ENCODE measurements at regions of chr12 and their contacts with region 1.

Region 1: DNA sequence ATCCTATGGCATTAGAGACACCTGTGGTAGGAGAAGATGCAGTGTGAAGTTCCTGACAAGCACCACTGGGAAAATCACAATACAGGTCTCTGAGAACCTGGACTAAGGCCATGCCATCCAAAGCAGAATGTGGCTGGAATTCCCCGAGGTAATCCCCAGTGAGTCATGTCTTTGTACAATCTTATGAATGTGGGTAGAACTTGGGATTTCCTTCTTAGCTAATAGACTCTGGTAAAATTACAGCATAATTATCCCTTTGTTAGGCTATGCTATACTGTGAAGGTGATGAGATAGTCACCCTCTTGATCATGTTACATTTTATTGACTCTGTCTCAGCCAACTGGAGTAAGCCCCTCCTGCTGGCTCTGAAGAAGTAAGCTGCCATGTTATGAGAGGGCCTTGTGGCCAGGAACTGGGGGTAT is 224.3 kb upstream of the DCN start:
- DNase-seq: peak; percentile 50
- H3K4me3 Mint-ChIP-seq: no peak overlapping the region
- H3K27ac Mint-ChIP-seq: no peak overlapping the region
- H3K4me1 Mint-ChIP-seq: peaks cover 7% of the 10 kb centered on the region
- H3K27me3 Mint-ChIP-seq: no peaks in the 10 kb centered on the region

Region 2: GRCh38 chr12:91387603-91388048 is 19.3 kb before region 1 on chr12:
- CTCF ChIA-PET with region 1: interaction called, 4 read pairs
- intact Hi-C with region 1: loop called (anchors 2 kb)
- DNase-seq: no peak
- H3K4me3 Mint-ChIP-seq: no peak overlapping the region
- H3K27ac Mint-ChIP-seq: no peak overlapping the region
- H3K4me1 Mint-ChIP-seq: no peaks in the 10 kb centered on the region
- H3K27me3 Mint-ChIP-seq: no peaks in the 10 kb centered on the region

Region 3: DNA sequence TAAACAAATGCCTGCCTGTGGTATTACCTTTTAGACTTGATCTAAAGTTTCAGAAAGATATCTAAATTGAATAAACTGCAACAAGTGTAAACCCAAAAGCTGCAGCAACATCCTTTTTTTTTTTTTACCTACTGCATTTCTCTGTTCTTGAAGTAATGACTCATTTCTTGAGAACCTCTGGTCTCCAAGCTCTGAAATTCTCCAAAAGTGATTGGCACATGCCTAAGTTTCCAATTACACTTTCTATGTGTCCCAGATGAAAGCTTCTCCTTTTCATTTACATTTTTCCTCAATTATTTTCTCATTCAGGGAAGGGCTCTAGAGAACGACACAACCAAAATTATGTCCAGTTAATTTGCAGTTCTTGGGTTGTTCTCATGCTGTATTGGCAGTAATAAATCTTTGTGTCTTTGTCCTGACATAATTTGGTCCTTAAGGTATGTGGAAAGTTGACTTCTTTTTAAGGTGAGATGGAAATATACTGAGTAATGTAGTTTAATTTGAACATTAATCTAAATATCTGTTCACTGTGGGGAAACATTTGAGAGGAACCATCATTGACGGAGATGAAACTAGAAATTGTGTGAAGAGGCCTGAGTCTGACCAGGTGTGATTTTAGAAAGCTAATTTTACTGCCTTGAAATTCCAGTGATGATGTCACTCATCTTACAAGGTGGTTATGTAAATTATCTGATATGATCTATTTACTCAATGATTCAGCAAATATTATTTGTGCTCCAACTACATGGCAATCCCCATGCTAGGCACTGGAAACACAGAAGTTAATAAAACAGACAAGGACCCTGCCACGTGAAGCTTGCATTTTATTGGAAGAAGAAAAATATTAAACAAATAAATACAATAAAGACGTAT is 211.1 kb after region 1 on chr12:
- CTCF ChIA-PET with region 1: no interaction called
- intact Hi-C with region 1: no loop called
- DNase-seq: no peak
- H3K4me3 Mint-ChIP-seq: no peak overlapping the region
- H3K27ac Mint-ChIP-seq: no peak overlapping the region
- H3K4me1 Mint-ChIP-seq: peaks cover 5% of the 10 kb centered on the region
- H3K27me3 Mint-ChIP-seq: no peaks in the 10 kb centered on the region